Psoas muscle (tissue), 8 donors: ENCODE measurements at regions of chr1 and their contacts with region 1.

Region 1: GRCh38 chr1:221470000-221470698 is 271.7 kb downstream of the DUSP10 start:
- DNase-seq: no peak
- ATAC-seq: peak in 1 of 4 donors; percentile 55
- H3K4me3 ChIP-seq: no peak overlapping the region
- H3K27ac ChIP-seq: no peak overlapping the region
- H3K4me1 ChIP-seq: no peaks in the 10 kb centered on the region
- H3K27me3 ChIP-seq: peaks cover 0 to 3% (median 0%) of the 10 kb centered on the region in 3 donors
- CTCF ChIP-seq: no peak

Region 2: GRCh38 chr1:221394011-221394544 is 76.1 kb before region 1 on chr1:
- intact Hi-C with region 1: no loop called
- DNase-seq: no peak
- ATAC-seq: peak in 1 of 4 donors; percentile 21
- H3K4me3 ChIP-seq: no peak overlapping the region
- H3K27ac ChIP-seq: no peak overlapping the region
- H3K4me1 ChIP-seq: no peaks in the 10 kb centered on the region
- H3K27me3 ChIP-seq: peaks cover 0 to 1% (median 0%) of the 10 kb centered on the region in 3 donors
- CTCF ChIP-seq: no peak

Region 3: GRCh38 chr1:221557013-221557412 is 86.9 kb after region 1 on chr1:
- intact Hi-C with region 1: no loop called
- DNase-seq: no peak
- ATAC-seq: no peak
- H3K4me3 ChIP-seq: no peak overlapping the region
- H3K27ac ChIP-seq: no peak overlapping the region
- H3K4me1 ChIP-seq: no peaks in the 10 kb centered on the region
- H3K27me3 ChIP-seq: no peaks in the 10 kb centered on the region
- CTCF ChIP-seq: no peak

Region 4: GRCh38 chr1:221567859-221568507 is 97.8 kb after region 1 on chr1:
- intact Hi-C with region 1: loop called in 1 of 2 experiments (anchors 5 kb)
- DNase-seq: no peak
- ATAC-seq: no peak
- H3K4me3 ChIP-seq: no peak overlapping the region
- H3K27ac ChIP-seq: no peak overlapping the region
- H3K4me1 ChIP-seq: peaks cover 13% of the 10 kb centered on the region
- H3K27me3 ChIP-seq: no peaks in the 10 kb centered on the region
- CTCF ChIP-seq: no peak